BJ (cell line): ENCODE measurements at regions of chr9 and their contacts with region 1.

Region 1: GRCh38 chr9:127916665-127917613 is at the start of gene ST6GALNAC4:
- DNase-seq: no peak
- H3K4me3 ChIP-seq: peak within 1 kb of the TSS; percentile 51
- H3K27me3 ChIP-seq: no peaks in the 10 kb centered on the region
- CTCF ChIP-seq: peak; percentile 5; the same call in 1 of the 2 replicates
- polyA plus RNA-seq, gene ST6GALNAC4: 21.4 and 35.5 TPM in 2 replicates

Region 2: GRCh38 chr9:127751269-127752054 is 165.5 kb before region 1 on chr9:
- CTCF ChIA-PET with region 1: no interaction called
- POLR2A ChIA-PET with region 1: no interaction called
- DNase-seq: no peak
- H3K4me3 ChIP-seq: no peak overlapping the region
- H3K27me3 ChIP-seq: peaks cover 30% of the 10 kb centered on the region
- CTCF ChIP-seq: no peak

Region 3: GRCh38 chr9:127785023-127785932 is 131.7 kb before region 1 on chr9:
- CTCF ChIA-PET with region 1: interaction called, 8 read pairs
- POLR2A ChIA-PET with region 1: interaction called, 17 read pairs
- DNase-seq: no peak
- H3K4me3 ChIP-seq: peak overlapping the region; percentile 95
- H3K27me3 ChIP-seq: 0 out of 2 replicates have a peak, but pooled peaks cover under 1% of the 10 kb centered on the region
- CTCF ChIP-seq: peak; percentile 91

Region 4: DNA sequence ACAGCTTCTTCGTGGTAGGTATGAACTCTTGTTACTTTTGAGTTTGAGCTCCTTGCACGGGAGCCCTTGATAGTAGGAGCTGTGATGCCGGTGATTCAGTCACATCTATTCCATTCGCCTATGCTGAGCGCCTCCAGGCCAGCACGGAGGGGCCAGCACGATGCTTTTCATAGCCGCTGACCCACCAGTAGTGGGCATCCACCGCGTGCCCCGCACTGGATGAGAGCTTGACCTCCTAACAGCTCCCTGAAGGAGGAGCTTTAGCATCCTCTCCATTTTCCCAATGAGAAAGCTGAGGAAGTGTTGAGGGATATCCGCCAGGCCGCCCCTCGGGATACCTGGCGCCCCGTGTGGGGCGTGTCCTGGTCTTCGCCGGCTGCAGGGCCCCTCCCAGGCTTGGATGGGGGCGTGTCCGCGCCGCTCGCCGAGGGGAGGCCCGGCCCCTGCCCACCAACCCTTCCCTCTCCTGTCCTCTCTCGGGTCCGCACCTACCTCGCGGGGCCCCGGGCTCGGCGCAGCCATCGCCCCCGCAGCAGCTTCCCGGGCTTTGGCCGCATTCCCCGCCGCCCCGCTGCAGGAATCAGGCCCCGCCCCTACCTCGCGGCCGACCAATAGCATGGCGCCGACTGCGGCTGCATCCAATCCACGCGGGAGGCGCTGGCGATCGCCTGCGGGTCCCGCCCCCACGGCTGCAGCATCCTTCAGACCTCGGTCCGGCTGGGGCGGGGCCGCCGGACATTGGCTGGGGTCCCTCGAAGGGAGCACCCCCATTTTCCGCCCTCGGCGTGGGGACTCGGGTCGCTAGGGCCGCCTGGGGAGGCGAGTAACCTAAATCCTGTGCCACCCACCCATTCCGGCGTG is 13.5 kb after region 1 on chr9 and contains the start of gene PIP5KL1:
- CTCF ChIA-PET with region 1: interaction called, 11 read pairs
- POLR2A ChIA-PET with region 1: no interaction called
- DNase-seq: no peak
- H3K4me3 ChIP-seq: peak within 1 kb of the TSS; percentile 52
- H3K27me3 ChIP-seq: no peaks in the 10 kb centered on the region
- CTCF ChIP-seq: peak; percentile 42
- polyA plus RNA-seq, gene PIP5KL1: 1.9 and 2.3 TPM in 2 replicates

Region 5: DNA sequence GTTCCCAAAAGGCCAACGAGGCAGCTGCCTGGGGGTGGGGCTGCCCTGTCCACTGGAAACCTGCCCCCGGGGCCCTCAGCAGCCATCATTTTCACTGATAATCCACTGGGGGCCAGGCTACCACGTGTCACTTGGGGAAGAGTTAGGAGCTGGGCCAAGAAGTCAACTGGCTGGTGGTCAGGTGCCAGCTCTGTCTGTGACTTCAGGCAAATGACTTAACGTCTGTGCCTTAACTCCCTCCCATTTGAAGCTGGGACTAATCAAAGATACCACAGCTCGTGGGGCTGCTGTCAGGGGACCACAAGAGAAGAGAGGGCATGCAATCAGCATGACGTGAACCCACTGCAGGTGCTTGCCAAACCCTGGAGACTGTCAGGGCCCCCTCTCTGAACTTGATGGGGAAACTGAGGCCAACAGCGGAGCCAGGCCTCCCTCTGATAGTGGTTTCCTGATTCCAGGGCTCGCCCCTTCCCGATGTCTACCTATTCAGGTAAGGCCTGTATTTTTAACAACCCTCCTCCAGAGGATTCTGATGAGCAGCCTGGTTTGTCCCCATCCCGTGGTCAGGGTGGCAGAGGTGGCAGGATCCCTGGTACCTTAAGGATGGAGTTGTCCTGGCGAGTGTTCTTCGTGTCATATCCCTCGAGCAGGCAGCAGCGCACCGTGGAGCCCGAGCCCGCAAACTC is 33.0 kb after region 1 on chr9:
- CTCF ChIA-PET with region 1: no interaction called
- POLR2A ChIA-PET with region 1: no interaction called
- DNase-seq: no peak
- H3K4me3 ChIP-seq: no peak overlapping the region
- H3K27me3 ChIP-seq: no peaks in the 10 kb centered on the region
- CTCF ChIP-seq: no peak